ENCODE measurements at regions of chr18 and their contacts with region 1.

Region 1: GRCh38 chr18:3585656-3586509 is 135.9 kb downstream of the TGIF1 start:
- DNase-seq: peak; percentile 79 to 90 (median 83)
- ATAC-seq: peak; percentile 92 to 94
- H3K4me3 ChIP-seq: no peak overlapping the region
- H3K27ac ChIP-seq: no peak overlapping the region
- H3K4me1 ChIP-seq: no peaks in the 10 kb centered on the region
- H3K27me3 ChIP-seq: no peaks in the 10 kb centered on the region

Region 2: DNA sequence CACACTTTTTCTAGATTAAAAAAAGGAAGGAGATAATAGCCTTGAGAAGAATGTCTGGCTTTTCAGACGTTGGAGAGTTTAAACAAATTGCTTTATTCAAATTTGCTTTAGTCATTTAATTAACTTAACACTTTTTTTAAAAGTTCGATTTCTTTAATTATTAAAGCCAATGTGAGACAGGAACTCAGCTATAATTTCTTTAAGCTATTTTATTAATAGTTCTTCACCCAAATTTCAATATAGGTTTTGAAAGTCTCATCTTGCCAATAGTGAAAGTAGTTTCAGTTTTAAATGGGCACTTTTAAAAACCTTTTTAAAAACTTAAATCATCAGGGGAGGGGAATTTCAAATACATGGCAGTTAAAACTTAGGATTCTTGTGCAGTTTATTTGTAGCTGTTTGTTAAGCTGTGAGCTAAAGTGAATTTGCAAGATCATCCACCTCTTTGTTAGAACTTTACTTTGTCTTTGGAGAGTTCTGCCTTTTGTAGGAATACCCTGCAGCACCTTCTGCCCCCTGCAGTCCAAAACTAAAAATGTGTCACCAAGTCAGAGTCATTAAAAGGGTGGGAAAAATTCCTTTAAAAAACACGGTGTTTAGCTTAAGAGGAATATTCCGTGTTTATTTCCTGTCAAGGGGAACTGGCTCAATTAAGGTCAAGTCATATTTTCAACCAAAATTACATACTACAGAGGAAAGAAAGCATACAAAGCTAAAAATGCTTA is 131.4 kb before region 1 on chr18:
- intact Hi-C with region 1: loop called in 3 of 4 experiments (anchors 5 to 10 kb)
- DNase-seq: no peak
- ATAC-seq: no peak
- H3K4me3 ChIP-seq: peak overlapping the region; percentile 92
- H3K27ac ChIP-seq: no peak overlapping the region
- H3K4me1 ChIP-seq: peaks cover 6% of the 10 kb centered on the region
- H3K27me3 ChIP-seq: no peaks in the 10 kb centered on the region

Measured in right cardiac atrium (tissue), 5 donors.